K562 (cell line): ENCODE measurements at regions of chr16 and their contacts with region 1.

Region 1: GRCh38 chr16:5502467-5502869 is 404.9 kb upstream of the EEF2KMT start:
- DNase-seq: peak; percentile 34 to 55 (median 43)
- ATAC-seq: peak; percentile 86
- H3K4me3 ChIP-seq: no peak overlapping the region
- H3K27ac ChIP-seq: no peak overlapping the region
- H3K4me1 ChIP-seq: no peaks in the 10 kb centered on the region
- H3K27me3 ChIP-seq: no peaks in the 10 kb centered on the region; a peak in 1 of 5 replicates
- CTCF ChIP-seq: peak; percentile 62 to 69 (median 68)
- EP300 ChIP-seq: no peak
- POLR2A ChIP-seq: no peak
- RAD21 ChIP-seq: peak; percentile 40 to 68

Region 2: GRCh38 chr16:5615868-5616642 is 113.6 kb after region 1 on chr16:
- CTCF ChIA-PET with region 1: interaction called, 4 read pairs
- POLR2A ChIA-PET with region 1: no interaction called
- in situ Hi-C with region 1: no loop called
- intact Hi-C with region 1: loop called (anchors 5 kb)
- DNase-seq: peak; percentile 86 to 89 (median 88)
- ATAC-seq: peak; percentile 100
- H3K4me3 ChIP-seq: no peak overlapping the region
- H3K27ac ChIP-seq: no peak overlapping the region
- H3K4me1 ChIP-seq: peaks cover 0 to 5% of the 10 kb centered on the region in 2 experiments; a peak in 3 of 5 replicates
- H3K27me3 ChIP-seq: peaks cover 0 to 14% of the 10 kb centered on the region in 2 experiments; a peak in 3 of 5 replicates
- CTCF ChIP-seq: peak; percentile 86 to 92 (median 87)
- EP300 ChIP-seq: no peak
- POLR2A ChIP-seq: no peak
- RAD21 ChIP-seq: peak; percentile 30 to 73; a peak in 3 of 4 replicates